ENCODE measurements at regions of chr1 and their contacts with region 1.

Region 1: GRCh38 chr1:154607609-154608396 is at the start of gene ADAR:
- DNase-seq: peak; percentile 95
- ATAC-seq: peak; percentile 78
- H3K4me3 Mint-ChIP-seq: peak within 1 kb of the TSS; percentile 89
- H3K27ac Mint-ChIP-seq: peak within 1 kb of the TSS; percentile 98
- H3K4me1 Mint-ChIP-seq: peaks cover 71% of the 10 kb centered on the region
- H3K27me3 Mint-ChIP-seq: no peaks in the 10 kb centered on the region
- CTCF ChIP-seq: no peak
- total RNA-seq, gene ADAR: 261 to 267 TPM

Region 2: GRCh38 chr1:154431586-154432373 is 176.0 kb before region 1 on chr1:
- CTCF ChIA-PET with region 1: no interaction called
- POLR2A ChIA-PET with region 1: no interaction called
- intact Hi-C with region 1: no loop called
- DNase-seq: peak; percentile 73
- ATAC-seq: peak; percentile 81
- H3K4me3 Mint-ChIP-seq: no peak overlapping the region
- H3K27ac Mint-ChIP-seq: peak overlapping the region; percentile 40
- H3K4me1 Mint-ChIP-seq: peaks cover 25% of the 10 kb centered on the region
- H3K27me3 Mint-ChIP-seq: no peaks in the 10 kb centered on the region
- CTCF ChIP-seq: no peak

Region 3: GRCh38 chr1:154621875-154622274 is 14.1 kb after region 1 on chr1:
- CTCF ChIA-PET with region 1: interaction called, 12 read pairs
- POLR2A ChIA-PET with region 1: interaction called, 18 read pairs
- intact Hi-C with region 1: no loop called
- DNase-seq: no peak
- ATAC-seq: peak; percentile 17
- H3K4me3 Mint-ChIP-seq: no peak overlapping the region
- H3K27ac Mint-ChIP-seq: peak overlapping the region; percentile 47
- H3K4me1 Mint-ChIP-seq: peaks cover 62% of the 10 kb centered on the region
- H3K27me3 Mint-ChIP-seq: no peaks in the 10 kb centered on the region
- CTCF ChIP-seq: no peak

Region 4: GRCh38 chr1:154627257-154628120 is 19.7 kb after region 1 on chr1:
- CTCF ChIA-PET with region 1: interaction called, 4 read pairs
- POLR2A ChIA-PET with region 1: interaction called, 18 read pairs
- intact Hi-C with region 1: no loop called
- DNase-seq: peak; percentile 97
- ATAC-seq: peak; percentile 67
- H3K4me3 Mint-ChIP-seq: peak overlapping the region; percentile 99
- H3K27ac Mint-ChIP-seq: peak overlapping the region; percentile 96
- H3K4me1 Mint-ChIP-seq: peaks cover 42% of the 10 kb centered on the region
- H3K27me3 Mint-ChIP-seq: peaks cover 3% of the 10 kb centered on the region
- CTCF ChIP-seq: no peak